PC-3 (cell line): ENCODE measurements at regions of chr2 and their contacts with region 1.

Region 1: GRCh38 chr2:189412330-189412953 is 28.8 kb upstream of the WDR75 start:
- DNase-seq: peak; percentile 67
- ATAC-seq: peak; percentile 55
- H3K4me3 ChIP-seq: no peak overlapping the region
- H3K27ac ChIP-seq: peak overlapping the region; percentile 29; the same call in 1 of the 2 replicates
- H3K4me1 ChIP-seq: peaks cover 29% of the 10 kb centered on the region
- H3K27me3 ChIP-seq: no peaks in the 10 kb centered on the region
- CTCF ChIP-seq: peak; percentile 89

Region 2: DNA sequence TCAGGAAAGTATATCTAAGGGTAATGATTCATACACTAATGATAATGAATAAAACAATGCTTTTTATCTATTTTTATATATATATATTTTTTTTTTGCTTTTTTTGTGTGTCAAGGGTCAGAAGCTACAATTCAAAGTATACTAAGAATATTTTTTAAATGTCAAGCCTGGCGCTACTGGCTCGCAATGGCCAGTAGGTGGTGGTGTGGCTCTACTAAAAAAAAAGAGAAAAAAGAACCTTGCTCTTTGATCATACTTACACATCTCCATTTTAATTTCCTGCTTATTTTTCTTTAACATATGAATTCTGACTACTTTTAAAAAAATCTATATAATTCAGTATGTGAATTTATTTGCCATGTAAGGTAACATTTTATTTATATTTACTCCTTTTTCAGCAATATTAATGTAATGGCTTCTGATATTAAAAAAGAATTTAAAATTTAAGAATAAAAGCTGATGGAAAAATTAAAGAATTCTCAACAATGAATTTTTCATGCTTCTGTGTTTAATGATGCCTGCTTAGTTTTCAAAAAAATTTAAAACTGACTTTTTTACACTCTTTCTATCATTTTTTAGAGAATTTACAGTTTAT is 887.8 kb before region 1 on chr2:
- CTCF ChIA-PET with region 1: no interaction called
- POLR2A ChIA-PET with region 1: no interaction called
- intact Hi-C with region 1: loop called (anchors 1 kb)
- DNase-seq: peak; percentile 75
- ATAC-seq: no peak
- H3K4me3 ChIP-seq: no peak overlapping the region
- H3K27ac ChIP-seq: no peak overlapping the region
- H3K4me1 ChIP-seq: peaks cover 5% of the 10 kb centered on the region; the same call in 1 of the 2 replicates
- H3K27me3 ChIP-seq: no peaks in the 10 kb centered on the region
- CTCF ChIP-seq: peak; percentile 61

Region 3: GRCh38 chr2:189096769-189097447 is 315.5 kb before region 1 on chr2:
- CTCF ChIA-PET with region 1: interaction called, 3 read pairs
- POLR2A ChIA-PET with region 1: no interaction called
- intact Hi-C with region 1: loop called (anchors 1 kb)
- DNase-seq: peak; percentile 88
- ATAC-seq: peak; percentile 86
- H3K4me3 ChIP-seq: no peak overlapping the region
- H3K27ac ChIP-seq: peak overlapping the region; percentile 22
- H3K4me1 ChIP-seq: peaks cover 34% of the 10 kb centered on the region
- H3K27me3 ChIP-seq: no peaks in the 10 kb centered on the region
- CTCF ChIP-seq: no peak

Region 4: GRCh38 chr2:189287982-189288521 is 124.4 kb before region 1 on chr2:
- CTCF ChIA-PET with region 1: no interaction called
- POLR2A ChIA-PET with region 1: no interaction called
- intact Hi-C with region 1: loop called (anchors 1 kb)
- DNase-seq: peak; percentile 84
- ATAC-seq: peak; percentile 87
- H3K4me3 ChIP-seq: no peak overlapping the region
- H3K27ac ChIP-seq: peak overlapping the region; percentile 38
- H3K4me1 ChIP-seq: peaks cover 35% of the 10 kb centered on the region
- H3K27me3 ChIP-seq: no peaks in the 10 kb centered on the region
- CTCF ChIP-seq: peak; percentile 93

Region 5: DNA sequence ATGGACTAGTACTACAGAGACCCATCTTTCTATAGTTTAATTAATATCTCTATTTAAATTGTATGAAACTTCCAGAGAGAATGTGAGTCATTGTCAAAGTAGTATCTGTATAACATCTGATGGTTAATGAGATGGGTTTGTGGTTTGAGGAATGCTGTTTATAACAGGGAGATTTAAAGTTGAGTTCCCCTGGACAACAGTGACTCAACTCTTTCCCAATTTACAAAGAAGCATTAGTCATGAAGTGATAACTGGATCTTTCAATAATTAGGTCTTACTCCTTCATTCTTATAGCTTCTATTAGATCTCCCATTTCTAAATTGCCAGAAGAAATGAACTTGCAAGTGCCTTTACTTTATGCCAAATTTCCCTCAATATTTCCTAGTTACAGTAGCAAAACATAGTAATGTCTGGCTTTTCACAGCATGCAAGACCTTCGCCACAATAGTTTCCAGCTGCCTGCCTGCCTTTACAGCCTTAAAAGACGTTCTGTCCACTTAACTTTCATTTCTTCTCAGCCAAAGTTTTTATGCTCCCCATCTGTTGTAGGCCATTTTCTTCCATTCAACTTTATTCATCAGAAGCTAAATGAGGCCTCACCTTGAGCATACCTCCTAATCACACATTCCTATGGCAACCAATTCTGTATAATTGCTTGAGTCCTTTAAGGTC is 18.9 kb before region 1 on chr2:
- CTCF ChIA-PET with region 1: interaction called, 10 read pairs
- POLR2A ChIA-PET with region 1: interaction called, 4 read pairs
- intact Hi-C with region 1: loop called (anchors 2 kb)
- DNase-seq: peak; percentile 94
- ATAC-seq: peak; percentile 97
- H3K4me3 ChIP-seq: peak overlapping the region; percentile 43; the same call in 1 of the 2 replicates
- H3K27ac ChIP-seq: peak overlapping the region; percentile 73
- H3K4me1 ChIP-seq: peaks cover 22% of the 10 kb centered on the region
- H3K27me3 ChIP-seq: no peaks in the 10 kb centered on the region
- CTCF ChIP-seq: no peak

Region 6: DNA sequence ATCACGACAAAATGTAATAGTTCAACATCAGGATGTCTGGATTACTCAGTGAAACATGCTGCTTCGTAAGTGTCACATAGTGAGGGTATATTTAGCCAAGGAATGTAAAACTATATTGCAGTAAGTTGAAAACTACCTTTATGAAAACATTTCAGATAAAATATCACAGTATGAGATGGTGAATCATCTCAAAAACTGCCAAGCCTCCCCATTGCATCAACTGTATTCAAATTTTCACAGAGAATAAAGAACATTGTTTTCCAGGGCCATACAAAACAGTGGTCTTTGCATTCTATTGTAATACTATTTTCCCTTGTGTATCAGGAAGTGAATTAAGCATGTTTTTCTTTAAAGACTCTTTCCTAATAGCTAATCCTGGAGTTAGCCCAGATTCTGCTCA is 697.7 kb after region 1 on chr2:
- CTCF ChIA-PET with region 1: no interaction called
- POLR2A ChIA-PET with region 1: no interaction called
- intact Hi-C with region 1: no loop called
- DNase-seq: no peak
- ATAC-seq: no peak
- H3K4me3 ChIP-seq: no peak overlapping the region
- H3K27ac ChIP-seq: no peak overlapping the region
- H3K4me1 ChIP-seq: no peaks in the 10 kb centered on the region
- H3K27me3 ChIP-seq: no peaks in the 10 kb centered on the region
- CTCF ChIP-seq: no peak